PC-9 (cell line): ENCODE measurements at regions of chr1 and their contacts with region 1.

Region 1: GRCh38 chr1:32215629-32216480 is 6.3 kb downstream of the TMEM234 start:
- DNase-seq: peak in 1 of 2 experiments; percentile 61
- H3K4me3 ChIP-seq: no peak overlapping the region
- H3K27ac ChIP-seq: no peak overlapping the region
- H3K4me1 ChIP-seq: peaks cover 9% of the 10 kb centered on the region
- H3K27me3 ChIP-seq: no peaks in the 10 kb centered on the region
- CTCF ChIP-seq: peak; percentile 87

Region 2: DNA sequence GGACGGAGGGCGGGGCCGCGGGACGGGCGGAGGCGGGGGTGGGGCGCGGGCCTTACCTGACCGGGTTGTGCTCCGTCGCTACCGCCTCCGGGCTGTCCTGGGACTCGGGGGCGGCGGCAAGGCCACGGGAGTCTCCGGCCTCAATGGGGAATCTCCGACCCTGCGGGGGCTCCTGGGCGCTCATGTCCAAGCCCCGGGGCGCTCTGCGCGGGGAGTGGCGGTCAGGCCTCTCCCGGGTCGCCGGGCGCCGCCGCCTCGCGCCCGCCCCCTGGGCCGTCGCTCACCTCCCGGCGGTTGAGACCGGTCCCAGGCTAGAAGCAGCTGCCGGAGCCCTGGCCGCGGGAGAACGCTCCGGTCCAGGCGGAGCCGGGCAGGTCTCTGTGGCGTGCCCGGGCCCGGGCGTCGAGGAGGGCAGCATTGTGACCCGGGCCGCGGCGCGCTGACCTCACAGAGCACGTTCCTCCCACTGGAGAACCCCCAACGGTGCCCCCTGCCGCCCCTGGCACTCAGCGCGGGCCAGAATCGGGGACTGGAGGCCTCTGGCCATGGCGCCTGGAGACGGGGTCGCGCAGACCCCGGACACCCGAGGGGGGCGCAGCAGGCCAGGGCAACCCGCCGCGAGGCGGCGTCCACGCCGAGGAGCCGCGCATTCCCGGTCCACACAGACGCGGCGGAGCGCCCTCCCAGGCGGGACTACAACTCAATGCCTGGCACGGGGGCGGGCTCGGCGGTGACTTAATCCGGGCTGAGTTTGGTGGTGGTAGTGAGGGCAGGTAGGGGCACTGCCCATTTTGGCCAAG is 146.0 kb after region 1 on chr1:
- CTCF ChIA-PET with region 1: no interaction called
- POLR2A ChIA-PET with region 1: no interaction called
- intact Hi-C with region 1: loop called (anchors 2 kb)
- DNase-seq: peak in 1 of 2 experiments; percentile 35
- H3K4me3 ChIP-seq: peak overlapping the region; percentile 27; the same call in 1 of the 2 replicates
- H3K27ac ChIP-seq: no peak overlapping the region
- H3K4me1 ChIP-seq: no peaks in the 10 kb centered on the region
- H3K27me3 ChIP-seq: no peaks in the 10 kb centered on the region
- CTCF ChIP-seq: no peak

Region 3: GRCh38 chr1:32413507-32414185 is 197.8 kb after region 1 on chr1:
- CTCF ChIA-PET with region 1: no interaction called
- POLR2A ChIA-PET with region 1: no interaction called
- intact Hi-C with region 1: loop called (anchors 1 kb)
- DNase-seq: peak; percentile 50 to 63
- H3K4me3 ChIP-seq: no peak overlapping the region
- H3K27ac ChIP-seq: no peak overlapping the region
- H3K4me1 ChIP-seq: no peaks in the 10 kb centered on the region
- H3K27me3 ChIP-seq: 0 out of 2 replicates have a peak, but pooled peaks cover 7% of the 10 kb centered on the region
- CTCF ChIP-seq: peak; percentile 97

Region 4: GRCh38 chr1:33616773-33617172 is 1400.9 kb after region 1 on chr1:
- CTCF ChIA-PET with region 1: interaction called, 15 read pairs
- POLR2A ChIA-PET with region 1: no interaction called
- intact Hi-C with region 1: no loop called
- DNase-seq: no peak
- H3K4me3 ChIP-seq: no peak overlapping the region
- H3K27ac ChIP-seq: no peak overlapping the region
- H3K4me1 ChIP-seq: no peaks in the 10 kb centered on the region
- H3K27me3 ChIP-seq: peaks cover 84% of the 10 kb centered on the region
- CTCF ChIP-seq: no peak